HepG2 (cell line): ENCODE measurements at regions of chr2 and their contacts with region 1.

Region 1: GRCh38 chr2:179842498-179843153 is 18.8 kb downstream of the ZNF385B start:
- DNase-seq: peak; percentile 48
- ATAC-seq: peak; percentile 97
- H3K4me3 ChIP-seq: no peak overlapping the region
- H3K27ac ChIP-seq: no peak overlapping the region
- H3K4me1 ChIP-seq: peaks cover under 1% of the 10 kb centered on the region; the same call in 1 of the 2 replicates
- H3K27me3 ChIP-seq: no peaks in the 10 kb centered on the region
- CTCF ChIP-seq: peak; percentile 74
- EP300 ChIP-seq: no peak
- POLR2A ChIP-seq: no peak
- RAD21 ChIP-seq: peak; percentile 47; the same call in 1 of the 2 replicates

Region 2: GRCh38 chr2:179898873-179899272 is 56.2 kb after region 1 on chr2:
- CTCF ChIA-PET with region 1: interaction called, 8 read pairs
- POLR2A ChIA-PET with region 1: no interaction called
- in situ Hi-C with region 1: loop called (anchors 5 kb)
- intact Hi-C with region 1: loop called (anchors 1 kb)
- DNase-seq: peak; percentile 65
- ATAC-seq: peak; percentile 100
- H3K4me3 ChIP-seq: no peak overlapping the region
- H3K27ac ChIP-seq: no peak overlapping the region
- H3K4me1 ChIP-seq: no peaks in the 10 kb centered on the region
- H3K27me3 ChIP-seq: no peaks in the 10 kb centered on the region; a peak in 1 of 5 replicates
- CTCF ChIP-seq: peak; percentile 76
- EP300 ChIP-seq: no peak
- POLR2A ChIP-seq: no peak
- RAD21 ChIP-seq: no peak

Region 3: DNA sequence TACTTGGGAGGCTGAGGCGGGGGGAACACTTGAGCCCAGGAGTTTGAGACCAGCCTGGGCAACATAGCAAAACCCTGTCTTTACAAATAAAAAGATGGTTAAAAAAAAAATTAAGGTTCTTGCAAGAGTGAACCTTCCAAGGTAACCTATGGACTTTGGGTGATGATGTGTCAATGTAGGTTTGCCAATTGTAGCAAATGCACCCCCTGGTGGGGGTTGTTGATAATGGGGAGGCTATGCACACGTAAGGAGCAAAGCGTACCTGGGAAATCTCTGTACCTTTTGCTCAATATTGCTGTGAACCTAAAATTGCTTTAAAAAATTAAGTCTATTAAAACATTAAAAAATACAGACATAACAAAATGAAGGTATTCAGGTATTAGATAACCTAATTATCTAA is 94.0 kb after region 1 on chr2:
- CTCF ChIA-PET with region 1: interaction called, 3 read pairs
- POLR2A ChIA-PET with region 1: no interaction called
- in situ Hi-C with region 1: loop called (anchors 10 kb)
- intact Hi-C with region 1: loop called (anchors 1 kb)
- DNase-seq: peak; percentile 74
- ATAC-seq: peak; percentile 91
- H3K4me3 ChIP-seq: no peak overlapping the region
- H3K27ac ChIP-seq: no peak overlapping the region
- H3K4me1 ChIP-seq: peaks cover 4% of the 10 kb centered on the region
- H3K27me3 ChIP-seq: no peaks in the 10 kb centered on the region
- CTCF ChIP-seq: peak; percentile 71
- EP300 ChIP-seq: no peak
- POLR2A ChIP-seq: no peak
- RAD21 ChIP-seq: peak; percentile 35; the same call in 1 of the 2 replicates

Region 4: DNA sequence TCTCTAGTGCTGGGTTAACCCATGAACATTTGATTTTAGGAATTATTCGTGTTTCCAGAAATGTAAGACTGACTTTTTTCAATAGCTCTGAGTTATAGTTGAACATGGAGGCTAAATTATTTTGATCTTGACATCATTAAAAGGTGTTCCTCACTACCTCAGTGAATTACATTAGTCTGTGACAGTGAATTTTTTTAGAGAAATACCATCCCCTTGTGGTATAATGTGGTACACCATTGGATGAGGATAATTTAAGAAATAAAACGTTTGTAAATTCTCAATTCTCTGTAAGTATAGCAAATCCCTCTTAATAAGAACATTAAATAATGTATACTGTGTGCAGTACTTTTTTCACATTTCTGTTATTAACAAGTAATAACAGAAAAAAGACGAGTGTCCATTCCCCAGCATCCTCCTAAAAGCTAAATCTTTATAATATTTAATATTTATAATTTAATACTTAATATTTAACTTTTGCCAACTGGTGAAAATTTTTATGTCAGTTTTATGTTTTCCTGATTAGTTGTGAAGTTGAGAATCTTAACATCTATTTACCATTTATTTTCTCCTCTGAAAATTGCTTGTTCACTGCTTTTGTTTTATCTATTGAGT is 234.8 kb after region 1 on chr2:
- CTCF ChIA-PET with region 1: no interaction called
- POLR2A ChIA-PET with region 1: no interaction called
- in situ Hi-C with region 1: loop called (anchors 10 kb)
- intact Hi-C with region 1: loop called (anchors 1 kb)
- DNase-seq: peak; percentile 5
- ATAC-seq: peak; percentile 52; the same call in 2 of the 3 replicates
- H3K4me3 ChIP-seq: no peak overlapping the region
- H3K27ac ChIP-seq: no peak overlapping the region
- H3K4me1 ChIP-seq: no peaks in the 10 kb centered on the region
- H3K27me3 ChIP-seq: no peaks in the 10 kb centered on the region
- CTCF ChIP-seq: 0 out of 2 replicates have a peak, but pooled peaks have one; percentile 38
- EP300 ChIP-seq: no peak
- POLR2A ChIP-seq: no peak
- RAD21 ChIP-seq: no peak